Activated B cell treated with CpG ODN at 0.5 μM for 24 hours (primary cell): ENCODE measurements at regions of chr16 and their contacts with region 1.

Region 1: GRCh38 chr16:48164907-48165726 is 9.3 kb upstream of the ABCC12 start:
- DNase-seq: peak; percentile 60
- ATAC-seq: peak; percentile 89
- H3K4me3 Mint-ChIP-seq: no peak overlapping the region
- H3K27ac Mint-ChIP-seq: no peak overlapping the region
- H3K4me1 Mint-ChIP-seq: peaks cover 4% of the 10 kb centered on the region
- H3K27me3 Mint-ChIP-seq: peaks cover 4% of the 10 kb centered on the region
- CTCF ChIP-seq: no peak

Region 2: GRCh38 chr16:46555951-46556350 is 1609.2 kb before region 1 on chr16:
- CTCF ChIA-PET with region 1: interaction called, 16 read pairs
- POLR2A ChIA-PET with region 1: no interaction called
- intact Hi-C with region 1: loop called (anchors 2 kb)
- DNase-seq: no peak
- ATAC-seq: no peak
- H3K4me3 Mint-ChIP-seq: no peak overlapping the region
- H3K27ac Mint-ChIP-seq: no peak overlapping the region
- H3K4me1 Mint-ChIP-seq: no peaks in the 10 kb centered on the region
- H3K27me3 Mint-ChIP-seq: peaks cover 7% of the 10 kb centered on the region
- CTCF ChIP-seq: no peak

Region 3: DNA sequence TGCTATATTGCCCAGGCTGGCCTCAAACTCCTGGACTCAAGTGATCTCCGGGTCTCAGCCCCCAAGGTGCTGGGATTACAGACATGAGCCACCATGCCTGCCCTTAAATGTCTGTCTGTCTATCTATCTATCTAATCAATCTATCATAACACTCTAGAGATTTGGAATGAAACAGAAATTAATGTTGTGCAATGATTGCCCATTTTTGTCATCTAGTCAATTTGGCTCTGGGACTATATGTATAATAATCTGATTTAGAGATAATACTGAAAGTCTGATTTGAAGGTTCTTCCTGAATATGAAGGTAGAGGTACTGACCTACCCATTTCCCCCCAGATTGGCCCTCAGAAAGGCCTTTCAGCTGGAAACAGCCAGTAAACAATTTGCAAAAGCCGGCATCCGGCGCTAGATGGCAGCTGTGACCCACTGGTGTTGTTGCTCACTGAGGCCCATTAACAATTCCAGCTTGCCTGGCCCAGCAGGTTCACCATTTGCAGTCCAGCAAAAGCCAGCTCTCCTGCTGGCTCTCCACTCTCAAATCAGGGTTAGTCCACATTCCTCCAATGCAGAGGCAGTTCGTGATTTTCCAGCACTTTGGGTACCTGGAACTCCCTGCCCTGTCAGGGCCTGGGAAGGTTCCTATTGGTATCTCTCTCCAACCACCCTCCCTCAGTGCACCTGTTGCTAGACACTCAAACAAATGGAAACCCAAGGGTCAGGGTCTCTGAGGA is 1311.2 kb before region 1 on chr16:
- CTCF ChIA-PET with region 1: interaction called, 8 read pairs
- POLR2A ChIA-PET with region 1: no interaction called
- intact Hi-C with region 1: loop called (anchors 2 kb)
- DNase-seq: peak; percentile 53
- ATAC-seq: peak; percentile 72
- H3K4me3 Mint-ChIP-seq: no peak overlapping the region
- H3K27ac Mint-ChIP-seq: no peak overlapping the region
- H3K4me1 Mint-ChIP-seq: peaks cover 17% of the 10 kb centered on the region
- H3K27me3 Mint-ChIP-seq: no peaks in the 10 kb centered on the region
- CTCF ChIP-seq: peak; percentile 63

Region 4: DNA sequence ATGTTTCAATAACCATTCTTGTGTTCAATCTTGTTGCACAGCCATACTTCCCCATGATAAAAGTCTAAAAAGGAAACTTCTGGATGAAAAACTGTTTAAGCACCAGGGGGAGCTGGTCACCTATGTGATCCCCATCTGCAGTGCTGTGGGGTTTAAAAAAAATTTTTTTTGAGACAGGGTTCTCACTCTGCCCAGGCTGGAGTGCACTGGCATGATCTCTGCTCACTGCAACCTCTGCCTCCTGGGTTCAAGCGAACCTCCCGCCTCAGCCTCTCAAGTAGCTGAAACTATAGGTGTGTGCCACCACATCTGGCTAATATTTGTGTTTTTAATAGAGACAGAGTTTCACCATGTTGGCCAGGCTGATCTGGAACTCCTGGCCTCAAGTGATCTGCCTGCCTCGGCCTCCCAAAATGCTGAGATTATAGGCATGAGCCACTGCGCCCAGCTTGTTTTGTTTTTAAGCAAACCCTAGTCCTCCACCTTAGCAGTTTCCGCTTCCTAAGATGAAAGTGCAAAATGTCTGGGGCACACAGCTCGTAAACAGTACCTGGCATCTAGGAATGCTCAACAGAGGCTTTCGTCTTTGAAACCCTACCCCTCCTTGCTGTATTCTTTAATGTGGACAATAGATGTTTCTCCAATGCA is 1217.1 kb before region 1 on chr16:
- CTCF ChIA-PET with region 1: interaction called, 15 read pairs
- POLR2A ChIA-PET with region 1: no interaction called
- intact Hi-C with region 1: loop called (anchors 1 kb)
- DNase-seq: no peak
- ATAC-seq: peak; percentile 74
- H3K4me3 Mint-ChIP-seq: no peak overlapping the region
- H3K27ac Mint-ChIP-seq: no peak overlapping the region
- H3K4me1 Mint-ChIP-seq: peaks cover 7% of the 10 kb centered on the region
- H3K27me3 Mint-ChIP-seq: no peaks in the 10 kb centered on the region
- CTCF ChIP-seq: no peak

Region 5: DNA sequence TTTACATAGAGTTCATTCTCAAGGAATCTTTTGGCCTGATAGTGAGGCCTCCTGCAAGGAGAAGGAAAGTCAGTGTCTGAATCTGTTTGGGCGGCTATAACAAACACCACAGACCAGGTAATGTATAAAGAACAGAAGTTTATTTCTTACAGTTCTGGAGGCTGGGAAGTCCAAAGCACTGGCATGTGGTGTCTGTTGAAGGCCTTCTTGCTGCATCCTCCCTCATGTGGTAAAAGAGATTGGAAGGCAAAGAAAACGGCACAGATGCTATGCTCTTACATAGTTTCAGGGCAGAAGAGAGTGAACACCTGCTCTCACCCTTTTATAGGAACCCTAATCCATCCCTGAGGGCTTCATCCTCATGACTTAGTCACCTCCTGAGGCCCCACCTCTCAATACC is 1160.5 kb before region 1 on chr16:
- CTCF ChIA-PET with region 1: no interaction called
- POLR2A ChIA-PET with region 1: no interaction called
- intact Hi-C with region 1: no loop called
- DNase-seq: no peak
- ATAC-seq: no peak
- H3K4me3 Mint-ChIP-seq: no peak overlapping the region
- H3K27ac Mint-ChIP-seq: no peak overlapping the region
- H3K4me1 Mint-ChIP-seq: no peaks in the 10 kb centered on the region
- H3K27me3 Mint-ChIP-seq: no peaks in the 10 kb centered on the region
- CTCF ChIP-seq: no peak

Region 6: GRCh38 chr16:48143812-48144368 is 21.2 kb before region 1 on chr16:
- CTCF ChIA-PET with region 1: no interaction called
- POLR2A ChIA-PET with region 1: no interaction called
- intact Hi-C with region 1: no loop called
- DNase-seq: no peak
- ATAC-seq: no peak
- H3K4me3 Mint-ChIP-seq: no peak overlapping the region
- H3K27ac Mint-ChIP-seq: no peak overlapping the region
- H3K4me1 Mint-ChIP-seq: no peaks in the 10 kb centered on the region
- H3K27me3 Mint-ChIP-seq: peaks cover 9% of the 10 kb centered on the region
- CTCF ChIP-seq: no peak

Region 7: GRCh38 chr16:48542020-48542473 is 376.9 kb after region 1 on chr16:
- CTCF ChIA-PET with region 1: no interaction called
- POLR2A ChIA-PET with region 1: no interaction called
- intact Hi-C with region 1: loop called (anchors 10 kb)
- DNase-seq: no peak
- ATAC-seq: peak; percentile 67
- H3K4me3 Mint-ChIP-seq: no peak overlapping the region
- H3K27ac Mint-ChIP-seq: no peak overlapping the region
- H3K4me1 Mint-ChIP-seq: peaks cover 8% of the 10 kb centered on the region
- H3K27me3 Mint-ChIP-seq: no peaks in the 10 kb centered on the region
- CTCF ChIP-seq: no peak

Region 8: DNA sequence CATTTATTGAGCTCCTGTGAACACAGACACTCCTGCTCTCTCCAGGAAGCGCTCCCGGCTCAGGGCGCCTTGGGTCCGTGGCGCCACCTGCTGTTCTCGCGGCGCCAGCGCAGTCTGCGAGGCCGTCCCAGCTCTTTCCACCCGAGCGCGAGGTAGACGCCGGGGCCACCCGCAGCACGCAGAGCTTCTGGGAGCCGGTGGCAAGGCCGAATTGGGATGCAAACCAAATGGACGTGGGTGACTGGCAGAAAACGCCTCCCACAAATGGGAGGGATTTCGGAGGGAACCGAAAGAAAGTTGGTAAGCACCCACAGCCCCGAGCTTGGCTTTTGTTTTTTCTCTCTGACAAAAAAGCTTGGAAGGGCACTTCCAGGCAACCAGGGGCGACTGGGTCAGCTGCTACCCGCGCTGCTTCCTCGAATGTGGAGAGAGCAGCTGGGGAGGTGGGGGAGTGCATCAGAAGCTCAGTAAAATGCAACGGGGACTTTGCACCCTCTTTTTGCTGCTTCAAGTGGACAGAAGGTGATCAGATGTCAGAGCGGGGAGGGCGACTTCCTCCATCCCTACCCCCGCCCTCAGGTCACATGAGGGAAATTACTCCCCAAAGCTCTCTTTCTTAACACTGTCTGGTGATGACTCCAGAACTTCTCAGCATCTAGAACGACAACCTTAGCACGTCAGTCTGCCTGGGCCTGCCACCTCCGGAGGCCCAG is 458.3 kb after region 1 on chr16:
- CTCF ChIA-PET with region 1: interaction called, 5 read pairs
- POLR2A ChIA-PET with region 1: no interaction called
- intact Hi-C with region 1: loop called (anchors 5 kb)
- DNase-seq: peak; percentile 78
- ATAC-seq: peak; percentile 98
- H3K4me3 Mint-ChIP-seq: peak overlapping the region; percentile 82
- H3K27ac Mint-ChIP-seq: no peak overlapping the region
- H3K4me1 Mint-ChIP-seq: peaks cover 24% of the 10 kb centered on the region
- H3K27me3 Mint-ChIP-seq: peaks cover 3% of the 10 kb centered on the region
- CTCF ChIP-seq: peak; percentile 97

Region 9: DNA sequence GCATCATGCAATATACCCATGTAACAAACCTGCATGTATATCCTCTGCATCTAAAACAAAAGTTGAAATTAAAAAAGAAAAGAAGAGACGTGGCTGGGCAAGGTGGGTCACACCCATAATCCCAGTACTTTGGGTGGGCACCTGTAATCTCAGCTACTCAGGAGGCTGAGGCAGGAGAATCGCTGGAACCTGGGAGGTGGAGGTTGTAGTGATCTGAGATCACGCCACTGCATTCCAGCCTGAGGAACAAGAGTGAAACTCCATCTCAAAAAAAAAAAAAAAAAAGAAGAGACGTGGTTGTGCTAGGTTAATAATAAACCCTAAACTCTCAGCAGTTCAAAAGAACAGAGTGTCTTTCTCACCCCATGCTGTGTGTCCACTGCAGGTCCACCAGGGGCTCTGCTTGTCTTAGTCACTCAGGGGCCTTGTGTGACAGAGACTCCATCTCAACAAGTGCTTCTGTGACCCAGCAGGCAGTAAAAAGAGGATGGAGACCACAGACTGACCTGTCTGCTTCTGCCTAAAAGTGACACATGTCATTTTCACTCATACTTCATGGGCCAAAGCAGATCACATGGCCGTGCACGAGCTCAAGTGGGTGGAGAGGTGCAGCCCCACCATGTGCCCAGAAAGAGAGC is 467.1 kb after region 1 on chr16:
- CTCF ChIA-PET with region 1: interaction called, 7 read pairs
- POLR2A ChIA-PET with region 1: no interaction called
- intact Hi-C with region 1: loop called (anchors 2 kb)
- DNase-seq: no peak
- ATAC-seq: no peak
- H3K4me3 Mint-ChIP-seq: no peak overlapping the region
- H3K27ac Mint-ChIP-seq: no peak overlapping the region
- H3K4me1 Mint-ChIP-seq: peaks cover 8% of the 10 kb centered on the region
- H3K27me3 Mint-ChIP-seq: peaks cover 12% of the 10 kb centered on the region
- CTCF ChIP-seq: no peak